PC-3 (cell line): ENCODE measurements at regions of chrX and their contacts with region 1.

Region 1: GRCh38 chrX:4935846-4936245 is 1222.4 kb upstream of the PRKX start:
- DNase-seq: peak; percentile 59
- ATAC-seq: 0 out of 2 replicates have a peak, but pooled peaks have one; percentile 11
- H3K4me3 ChIP-seq: no peak overlapping the region
- H3K27ac ChIP-seq: 0 out of 2 replicates have a peak overlapping the region, but pooled peaks have one; percentile 4
- H3K4me1 ChIP-seq: peaks cover 33% of the 10 kb centered on the region
- H3K27me3 ChIP-seq: no peaks in the 10 kb centered on the region
- CTCF ChIP-seq: no peak

Region 2: DNA sequence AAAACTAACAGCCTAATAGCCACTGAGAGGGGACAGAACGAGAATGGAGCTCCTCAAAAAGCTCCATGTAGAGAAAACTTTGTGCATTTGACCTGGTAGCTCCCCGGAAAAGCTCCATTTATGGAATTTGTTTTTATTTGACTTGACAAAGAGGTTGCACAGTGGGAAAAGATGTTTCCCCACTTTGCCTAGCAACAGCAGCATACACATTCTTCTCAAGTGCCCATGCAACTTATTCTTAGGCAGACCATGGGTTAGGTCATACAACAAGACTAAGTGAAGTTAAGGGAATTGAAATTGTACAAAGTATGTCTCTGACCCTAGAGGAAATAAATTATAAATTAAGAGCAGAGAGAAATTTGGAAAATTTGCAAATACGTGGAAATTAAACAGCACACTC is 272.8 kb before region 1 on chrX:
- CTCF ChIA-PET with region 1: no interaction called
- POLR2A ChIA-PET with region 1: no interaction called
- intact Hi-C with region 1: loop called (anchors 2 kb)
- DNase-seq: no peak
- ATAC-seq: no peak
- H3K4me3 ChIP-seq: no peak overlapping the region
- H3K27ac ChIP-seq: no peak overlapping the region
- H3K4me1 ChIP-seq: peaks cover 11% of the 10 kb centered on the region
- H3K27me3 ChIP-seq: no peaks in the 10 kb centered on the region
- CTCF ChIP-seq: no peak

Region 3: DNA sequence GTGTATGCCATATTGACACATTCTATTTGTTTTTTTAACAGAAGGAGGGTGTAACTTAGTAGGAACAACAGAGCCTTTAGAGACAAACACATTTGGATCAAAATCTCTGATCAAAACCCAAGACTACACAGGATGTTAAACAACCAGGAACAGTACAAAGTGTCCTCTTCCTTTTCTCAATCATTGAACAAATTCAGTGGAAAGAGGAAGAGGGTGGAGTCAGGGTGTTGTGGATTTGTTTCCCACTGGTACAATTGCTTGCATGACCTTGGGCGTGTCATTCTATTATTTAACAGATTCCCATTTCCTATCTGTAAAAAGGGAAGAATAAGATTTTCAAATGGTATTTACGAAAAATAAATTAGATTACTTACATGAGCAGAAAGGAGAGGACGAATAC is 59.6 kb before region 1 on chrX:
- CTCF ChIA-PET with region 1: no interaction called
- POLR2A ChIA-PET with region 1: no interaction called
- intact Hi-C with region 1: loop called (anchors 5 kb)
- DNase-seq: no peak
- ATAC-seq: no peak
- H3K4me3 ChIP-seq: no peak overlapping the region
- H3K27ac ChIP-seq: no peak overlapping the region
- H3K4me1 ChIP-seq: no peaks in the 10 kb centered on the region
- H3K27me3 ChIP-seq: no peaks in the 10 kb centered on the region
- CTCF ChIP-seq: no peak